ENCODE measurements at regions of chr21 and their contacts with region 1.

Region 1: DNA sequence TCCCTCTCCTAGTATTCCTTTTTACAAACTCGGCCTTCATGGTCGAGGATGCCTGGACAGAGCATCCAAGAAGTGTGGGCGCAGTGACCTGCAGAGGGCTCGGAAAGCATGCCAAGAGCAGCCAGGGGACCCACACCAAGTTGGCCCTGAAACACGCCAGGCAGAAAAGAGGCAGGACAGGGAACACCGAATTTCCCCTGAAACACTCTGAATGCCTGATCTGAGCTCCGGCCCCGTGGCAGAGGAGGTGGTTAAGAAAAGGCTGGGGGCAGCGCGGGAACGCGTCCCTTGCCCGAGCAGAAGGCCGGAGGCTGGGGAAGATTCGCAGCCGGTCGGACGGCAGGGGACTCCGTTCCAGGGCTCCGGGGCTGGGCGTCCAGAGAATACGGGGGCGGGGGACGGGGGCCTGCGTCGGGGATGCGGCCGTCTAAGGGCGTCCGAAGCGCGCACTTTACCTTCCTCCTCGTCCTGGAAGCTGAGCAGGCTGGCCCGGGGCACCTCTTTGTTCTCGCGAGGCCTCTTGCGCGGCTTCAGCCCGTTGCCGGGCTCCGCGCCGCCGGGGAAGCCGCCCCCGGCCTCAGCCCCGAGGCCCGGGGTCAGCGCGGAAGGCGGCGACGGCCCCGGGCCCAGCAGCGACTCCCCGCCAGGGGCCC is 558 bp downstream of the PAXBP1 start:
- DNase-seq: peak in 1 of 9 donors; percentile 42
- ATAC-seq: peak; percentile 36
- H3K4me3 ChIP-seq: peak overlapping the region; percentile 77
- H3K4me3 Mint-ChIP-seq: peak overlapping the region; percentile 90 to 97 (median 94)
- H3K27ac ChIP-seq: peak overlapping the region; percentile 79
- H3K27ac Mint-ChIP-seq: peak overlapping the region; percentile 90 to 99 (median 95)
- H3K4me1 ChIP-seq: peaks cover 29 to 31% of the 10 kb centered on the region in 2 donors
- H3K4me1 Mint-ChIP-seq: peaks cover 43 to 75% (median 66%) of the 10 kb centered on the region in 7 donors
- H3K27me3 ChIP-seq: no peaks in the 10 kb centered on the region
- H3K27me3 Mint-ChIP-seq: peaks cover 0 to 5% (median 0%) of the 10 kb centered on the region in 5 donors

Region 2: DNA sequence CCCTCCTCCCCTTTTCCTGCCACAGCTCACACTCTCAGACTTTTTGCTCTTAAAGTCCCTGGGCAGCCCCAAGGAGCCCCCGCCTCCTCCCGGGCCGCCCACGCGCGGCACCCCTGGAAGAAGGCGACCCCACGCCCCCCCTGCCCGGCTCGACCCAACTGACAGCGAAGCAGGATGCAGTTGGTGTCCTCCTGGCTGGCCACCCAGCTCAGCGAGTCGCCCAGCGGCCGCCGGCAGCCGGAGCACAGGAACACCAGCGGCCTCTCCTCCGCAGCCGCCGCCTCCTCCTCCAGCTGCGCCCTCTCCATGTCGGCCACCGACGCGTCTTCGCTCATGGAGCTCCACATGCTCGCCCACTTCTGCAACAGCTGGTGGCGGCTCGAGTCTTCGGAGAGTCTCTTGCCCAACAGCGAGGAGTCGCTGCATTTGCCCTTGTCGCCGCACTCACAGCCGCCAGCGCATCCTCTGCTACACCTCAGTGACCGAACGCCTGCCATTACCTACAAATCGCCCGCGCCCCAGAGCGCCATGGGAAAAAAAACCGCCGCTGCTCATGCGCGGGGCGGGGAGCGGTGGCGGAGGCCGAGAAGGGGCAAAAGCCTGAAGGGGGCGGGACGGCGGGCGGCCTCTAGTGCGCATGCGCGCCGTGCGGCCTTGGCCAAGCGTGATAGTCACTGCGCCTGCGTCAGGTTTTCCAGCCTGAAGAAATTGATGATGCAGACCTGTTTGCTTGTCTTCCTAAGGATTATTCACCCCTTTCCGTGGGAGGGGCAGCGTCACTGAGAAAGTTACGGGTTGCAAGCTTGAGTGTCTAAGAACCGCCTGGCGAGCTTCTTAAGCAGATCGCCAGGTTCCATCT is 492.2 kb before region 1 on chr21 and contains the start of gene MIS18A:
- CTCF ChIA-PET with region 1: no interaction called
- POLR2A ChIA-PET with region 1: no interaction called
- intact Hi-C with region 1: loop called (anchors 2 to 5 kb)
- DNase-seq: peak; percentile 92 to 98 (median 95)
- ATAC-seq: peak; percentile 97
- H3K4me3 ChIP-seq: peak within 1 kb of the TSS; percentile 90
- H3K4me3 Mint-ChIP-seq: peak within 1 kb of the TSS; percentile 95 to 100 (median 98)
- H3K27ac ChIP-seq: peak within 1 kb of the TSS; percentile 70
- H3K27ac Mint-ChIP-seq: peak within 1 kb of the TSS; percentile 90 to 97 (median 94)
- H3K4me1 ChIP-seq: peaks cover 14 to 16% of the 10 kb centered on the region in 2 donors
- H3K4me1 Mint-ChIP-seq: peaks cover 8 to 36% (median 33%) of the 10 kb centered on the region in 7 donors
- H3K27me3 ChIP-seq: no peaks in the 10 kb centered on the region
- H3K27me3 Mint-ChIP-seq: no peaks in the 10 kb centered on the region
- total RNA-seq, gene MIS18A: 3.3 to 16.4 (median 8.4) TPM

Region 3: GRCh38 chr21:32653311-32653901 is 117.6 kb before region 1 on chr21:
- CTCF ChIA-PET with region 1: no interaction called
- POLR2A ChIA-PET with region 1: no interaction called
- intact Hi-C with region 1: loop called in 1 of 2 experiments (anchors 5 kb)
- DNase-seq: peak in 7 of 9 donors; percentile 8 to 40 (median 28)
- ATAC-seq: peak; percentile 64
- H3K4me3 ChIP-seq: no peak overlapping the region
- H3K4me3 Mint-ChIP-seq: no peak overlapping the region
- H3K27ac ChIP-seq: no peak overlapping the region
- H3K27ac Mint-ChIP-seq: no peak overlapping the region
- H3K4me1 ChIP-seq: no peaks in the 10 kb centered on the region
- H3K4me1 Mint-ChIP-seq: peaks cover 0 to 12% (median 0%) of the 10 kb centered on the region in 7 donors
- H3K27me3 ChIP-seq: no peaks in the 10 kb centered on the region
- H3K27me3 Mint-ChIP-seq: no peaks in the 10 kb centered on the region

Region 4: DNA sequence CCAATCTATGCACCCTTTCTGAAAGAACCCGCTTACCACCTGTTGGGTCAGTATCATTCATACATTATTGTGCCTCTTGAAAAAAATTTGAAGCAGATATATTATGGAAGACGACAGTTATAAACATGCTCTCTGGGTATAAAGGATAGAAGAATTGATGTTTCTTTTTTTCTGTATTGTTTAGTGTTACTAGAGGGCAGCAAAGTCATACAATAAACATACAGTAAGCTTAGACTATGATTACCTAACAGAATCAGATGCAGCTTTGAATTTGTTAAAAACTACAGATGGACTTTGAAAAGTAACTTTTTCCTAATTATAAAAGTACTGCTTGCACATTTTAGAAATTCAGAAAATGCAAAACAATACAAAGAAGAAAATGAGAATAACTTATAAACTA is 11.7 kb after region 1 on chr21:
- CTCF ChIA-PET with region 1: no interaction called
- POLR2A ChIA-PET with region 1: interaction called, 12 read pairs
- intact Hi-C with region 1: no loop called
- DNase-seq: no peak
- ATAC-seq: no peak
- H3K4me3 ChIP-seq: no peak overlapping the region
- H3K4me3 Mint-ChIP-seq: no peak overlapping the region
- H3K27ac ChIP-seq: no peak overlapping the region
- H3K27ac Mint-ChIP-seq: no peak overlapping the region
- H3K4me1 ChIP-seq: no peaks in the 10 kb centered on the region
- H3K4me1 Mint-ChIP-seq: peaks cover 0 to 12% (median 6%) of the 10 kb centered on the region in 7 donors
- H3K27me3 ChIP-seq: no peaks in the 10 kb centered on the region
- H3K27me3 Mint-ChIP-seq: peaks cover 0 to 2% (median 0%) of the 10 kb centered on the region in 5 donors

Region 5: GRCh38 chr21:33324291-33325221 is 553.6 kb after region 1 on chr21 and contains the start of gene IFNAR1:
- CTCF ChIA-PET with region 1: interaction called, 3 read pairs
- POLR2A ChIA-PET with region 1: interaction called, 4 read pairs
- intact Hi-C with region 1: loop called (anchors 1 kb)
- DNase-seq: peak; percentile 94 to 100 (median 98)
- ATAC-seq: peak; percentile 94
- H3K4me3 ChIP-seq: peak within 1 kb of the TSS; percentile 87
- H3K4me3 Mint-ChIP-seq: no peak within 1 kb of the TSS
- H3K27ac ChIP-seq: peak within 1 kb of the TSS; percentile 94
- H3K27ac Mint-ChIP-seq: no peak within 1 kb of the TSS
- H3K4me1 ChIP-seq: peaks cover 21 to 23% of the 10 kb centered on the region in 2 donors
- H3K4me1 Mint-ChIP-seq: peaks cover 0 to 33% (median 26%) of the 10 kb centered on the region in 7 donors
- H3K27me3 ChIP-seq: no peaks in the 10 kb centered on the region
- H3K27me3 Mint-ChIP-seq: peaks cover 0 to 2% (median 0%) of the 10 kb centered on the region in 5 donors
- total RNA-seq, gene IFNAR1: 24.7 to 60.8 (median 40.0) TPM

Region 6: DNA sequence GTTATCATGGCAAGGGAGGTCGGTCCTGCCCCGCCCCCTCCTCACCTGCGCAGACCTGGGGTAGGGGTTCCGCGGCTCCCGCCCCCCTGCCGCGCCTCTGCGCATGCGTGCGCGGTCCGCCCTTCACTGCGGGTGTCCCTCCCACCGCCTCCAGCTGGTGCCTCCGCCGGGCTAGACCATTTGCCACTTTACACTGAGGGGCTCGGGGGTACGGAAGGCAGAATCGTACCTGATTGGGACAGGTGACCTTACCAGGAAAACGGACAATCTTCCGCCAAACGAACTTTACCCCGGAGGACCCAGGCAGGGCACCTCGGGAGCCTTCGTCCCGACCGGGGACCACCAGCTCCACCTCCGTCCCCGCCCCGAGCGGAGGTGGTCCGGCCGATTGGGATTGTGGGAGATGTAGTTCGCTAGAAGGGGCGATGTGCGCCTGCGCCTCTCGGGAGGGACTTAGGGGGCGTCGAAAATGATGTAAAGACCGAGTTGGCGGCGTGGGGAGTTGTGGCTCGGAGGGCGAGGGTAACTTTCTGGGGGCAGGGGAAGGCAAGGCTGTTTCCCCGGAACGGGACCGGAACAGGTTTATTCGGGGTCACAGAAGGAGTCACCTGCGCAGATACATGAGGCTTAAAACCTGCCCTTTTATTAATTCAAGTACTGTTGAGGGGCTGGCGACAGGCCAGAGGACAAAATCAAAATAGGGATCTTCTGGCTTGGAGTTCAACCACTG is 720.5 kb after region 1 on chr21 and contains the start of gene DNAJC28:
- CTCF ChIA-PET with region 1: no interaction called
- POLR2A ChIA-PET with region 1: interaction called, 4 read pairs
- intact Hi-C with region 1: loop called in 1 of 2 experiments (anchors 5 kb)
- DNase-seq: peak; percentile 91 to 96 (median 95)
- ATAC-seq: peak; percentile 99
- H3K4me3 ChIP-seq: peak within 1 kb of the TSS; percentile 93
- H3K4me3 Mint-ChIP-seq: peak within 1 kb of the TSS; percentile 86 to 97 (median 92)
- H3K27ac ChIP-seq: peak within 1 kb of the TSS; percentile 74
- H3K27ac Mint-ChIP-seq: peak within 1 kb of the TSS; percentile 73 to 97 (median 92)
- H3K4me1 ChIP-seq: peaks cover 0 to 5% of the 10 kb centered on the region in 2 donors
- H3K4me1 Mint-ChIP-seq: peaks cover 5 to 14% (median 12%) of the 10 kb centered on the region in 7 donors
- H3K27me3 ChIP-seq: no peaks in the 10 kb centered on the region
- H3K27me3 Mint-ChIP-seq: peaks cover 0 to 15% (median 0%) of the 10 kb centered on the region in 5 donors
- total RNA-seq, gene DNAJC28: 0.27 to 1.5 (median 0.61) TPM in 4 of 5 experiments, not detected in the other